GM12878 (cell line): ENCODE measurements at regions of chr2 and their contacts with region 1.

Region 1: GRCh38 chr2:219171231-219171651 is 1.4 kb upstream of the SLC23A3 start:
- DNase-seq: no peak
- ATAC-seq: peak; percentile 61
- H3K4me3 ChIP-seq: no peak overlapping the region
- H3K27ac ChIP-seq: no peak overlapping the region
- H3K4me1 ChIP-seq: no peaks in the 10 kb centered on the region; the same call in 1 of the 2 replicates
- H3K27me3 ChIP-seq: no peaks in the 10 kb centered on the region
- CTCF ChIP-seq: peak; percentile 65 to 77 (median 65)
- EP300 ChIP-seq: no peak
- POLR2A ChIP-seq: 0 out of 2 replicates have a peak, but pooled peaks have one; percentile 33
- RAD21 ChIP-seq: peak; percentile 52

Region 2: GRCh38 chr2:219206442-219207253 is 35.4 kb after region 1 on chr2 and contains the start of gene ZFAND2B:
- CTCF ChIA-PET with region 1: interaction called, 20 read pairs
- POLR2A ChIA-PET with region 1: interaction called, 47 read pairs
- RAD21 ChIA-PET with region 1: interaction called, 21 read pairs
- SMC1A ChIA-PET with region 1: interaction called, 14 read pairs
- in situ Hi-C with region 1: loop called (anchors 5 kb)
- intact Hi-C with region 1: loop called (anchors 2 kb)
- DNase-seq: peak; percentile 52
- ATAC-seq: peak; percentile 99
- H3K4me3 ChIP-seq: peak within 1 kb of the TSS; percentile 50
- H3K27ac ChIP-seq: peak within 1 kb of the TSS; percentile 72
- H3K4me1 ChIP-seq: peaks cover 8% of the 10 kb centered on the region
- H3K27me3 ChIP-seq: no peaks in the 10 kb centered on the region
- CTCF ChIP-seq: peak in 2 of 3 experiments; percentile 9 to 14; a peak in 1 of 6 replicates
- EP300 ChIP-seq: no peak
- POLR2A ChIP-seq: peak; percentile 99
- RAD21 ChIP-seq: no peak
- polyA plus RNA-seq, gene ZFAND2B: 5.4 to 10.7 TPM

Region 3: GRCh38 chr2:219218732-219219701 is 47.8 kb after region 1 on chr2 and contains the start of gene ABCB6:
- CTCF ChIA-PET with region 1: interaction called, 14 read pairs
- POLR2A ChIA-PET with region 1: interaction called, 21 read pairs
- RAD21 ChIA-PET with region 1: interaction called, 4 read pairs
- SMC1A ChIA-PET with region 1: interaction called, 4 read pairs
- in situ Hi-C with region 1: no loop called
- intact Hi-C with region 1: no loop called
- DNase-seq: peak; percentile 63
- ATAC-seq: peak; percentile 92
- H3K4me3 ChIP-seq: peak within 1 kb of the TSS; percentile 92
- H3K27ac ChIP-seq: peak within 1 kb of the TSS; percentile 63
- H3K4me1 ChIP-seq: peaks cover 16% of the 10 kb centered on the region
- H3K27me3 ChIP-seq: no peaks in the 10 kb centered on the region
- CTCF ChIP-seq: no peak
- EP300 ChIP-seq: no peak
- POLR2A ChIP-seq: peak; percentile 95
- RAD21 ChIP-seq: no peak
- polyA plus RNA-seq, gene ABCB6: 2.3 to 10.1 TPM

Region 4: DNA sequence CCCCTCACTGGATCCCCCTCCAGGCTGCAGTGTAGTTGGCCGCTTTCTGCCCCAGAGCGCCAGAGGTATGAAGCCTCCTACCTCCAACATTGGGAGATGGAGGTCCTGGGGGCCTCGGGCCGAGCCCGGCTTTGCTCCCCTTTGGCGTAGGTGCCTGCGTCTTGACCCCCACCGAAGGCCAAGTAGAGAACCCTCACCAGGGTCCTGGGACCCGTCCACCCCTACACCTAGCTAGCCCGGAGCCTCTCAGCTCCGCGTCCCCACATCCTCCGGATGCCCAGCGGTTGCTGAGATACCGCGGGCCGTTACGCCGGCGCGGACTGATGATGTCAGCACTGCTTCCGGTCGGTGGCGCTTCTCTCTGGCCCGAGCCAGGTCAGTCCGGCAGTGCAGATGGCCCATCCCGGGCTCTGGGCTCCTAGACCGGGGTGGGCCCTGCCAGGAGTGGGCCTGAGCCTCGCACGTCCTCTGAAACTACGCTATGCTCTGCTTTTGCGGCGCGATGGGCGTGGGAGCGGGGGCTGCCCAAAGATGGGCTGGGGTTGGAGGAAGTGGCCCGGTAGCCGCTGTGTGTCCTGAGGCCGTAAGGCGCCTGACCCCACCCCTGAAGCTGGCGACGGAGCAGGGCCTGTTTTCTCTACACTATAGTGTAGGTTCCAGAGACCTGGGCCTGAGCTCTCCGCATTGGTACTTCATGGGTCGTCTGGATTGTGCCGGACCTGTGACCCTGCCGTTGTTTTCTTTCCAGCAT is 74.1 kb after region 1 on chr2 and contains the starts of genes GLB1L and STK16:
- CTCF ChIA-PET with region 1: interaction called, 15 read pairs
- POLR2A ChIA-PET with region 1: interaction called, 25 read pairs
- RAD21 ChIA-PET with region 1: interaction called, 22 read pairs
- SMC1A ChIA-PET with region 1: interaction called, 13 read pairs
- in situ Hi-C with region 1: no loop called
- intact Hi-C with region 1: no loop called
- DNase-seq: peak; percentile 75
- ATAC-seq: peak; percentile 83
- H3K4me3 ChIP-seq: peak within 1 kb of the TSS; percentile 90
- H3K27ac ChIP-seq: peak within 1 kb of the TSS; percentile 70
- H3K4me1 ChIP-seq: peaks cover 44% of the 10 kb centered on the region
- H3K27me3 ChIP-seq: no peaks in the 10 kb centered on the region
- CTCF ChIP-seq: no peak
- EP300 ChIP-seq: no peak
- POLR2A ChIP-seq: peak; percentile 96
- RAD21 ChIP-seq: no peak
- polyA plus RNA-seq, gene GLB1L: 0.29 to 1.0 TPM
- polyA plus RNA-seq, gene STK16: 8.4 to 9.0 TPM

Region 5: DNA sequence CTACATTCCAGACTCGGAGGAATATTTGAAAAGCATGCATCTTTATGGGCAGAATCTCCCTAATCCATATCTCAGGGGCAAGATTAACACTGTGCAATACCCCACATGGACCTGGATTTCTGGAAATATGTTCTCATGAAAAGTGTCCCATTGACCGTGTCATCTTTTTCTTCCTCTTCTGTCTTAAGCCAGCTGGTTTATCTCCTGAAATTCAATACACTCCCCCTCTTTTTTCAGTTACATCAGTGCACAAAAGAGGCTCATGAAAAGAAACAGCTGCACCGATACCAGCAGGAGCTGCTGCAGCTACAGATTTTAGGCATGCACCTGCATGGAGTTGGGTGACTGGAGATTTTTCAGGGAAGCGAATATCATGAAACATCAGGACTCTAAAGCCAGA is 573.4 kb after region 1 on chr2:
- CTCF ChIA-PET with region 1: no interaction called
- POLR2A ChIA-PET with region 1: no interaction called
- RAD21 ChIA-PET with region 1: no interaction called
- SMC1A ChIA-PET with region 1: no interaction called
- in situ Hi-C with region 1: no loop called
- intact Hi-C with region 1: no loop called
- DNase-seq: no peak
- ATAC-seq: no peak
- H3K4me3 ChIP-seq: no peak overlapping the region
- H3K27ac ChIP-seq: no peak overlapping the region
- H3K4me1 ChIP-seq: no peaks in the 10 kb centered on the region
- H3K27me3 ChIP-seq: peaks cover 2 to 3% of the 10 kb centered on the region in 2 experiments; a peak in 2 of 4 replicates
- CTCF ChIP-seq: no peak
- EP300 ChIP-seq: no peak
- POLR2A ChIP-seq: no peak
- RAD21 ChIP-seq: no peak

Region 6: GRCh38 chr2:220460257-220460985 is 1289.2 kb after region 1 on chr2:
- CTCF ChIA-PET with region 1: no interaction called
- POLR2A ChIA-PET with region 1: no interaction called
- RAD21 ChIA-PET with region 1: no interaction called
- SMC1A ChIA-PET with region 1: no interaction called
- in situ Hi-C with region 1: no loop called
- intact Hi-C with region 1: no loop called
- DNase-seq: no peak
- ATAC-seq: peak; percentile 56; the same call in 2 of the 3 replicates
- H3K4me3 ChIP-seq: no peak overlapping the region
- H3K27ac ChIP-seq: no peak overlapping the region
- H3K4me1 ChIP-seq: no peaks in the 10 kb centered on the region
- H3K27me3 ChIP-seq: no peaks in the 10 kb centered on the region
- CTCF ChIP-seq: 0 out of 6 replicates have a peak, but pooled peaks of 2 of the 3 experiments have one; percentile 1 to 24
- EP300 ChIP-seq: no peak
- POLR2A ChIP-seq: no peak
- RAD21 ChIP-seq: no peak